HepG2 (cell line): ENCODE measurements at regions of chr1 and their contacts with region 1.

Region 1: GRCh38 chr1:108049178-108049819 is 84.3 kb upstream of the VAV3 start:
- DNase-seq: no peak
- ATAC-seq: peak; percentile 71
- H3K4me3 ChIP-seq: no peak overlapping the region
- H3K27ac ChIP-seq: no peak overlapping the region
- H3K4me1 ChIP-seq: peaks cover 45% of the 10 kb centered on the region
- H3K27me3 ChIP-seq: peaks cover 0 to 18% of the 10 kb centered on the region in 2 experiments; a peak in 2 of 5 replicates
- CTCF ChIP-seq: peak; percentile 14; the same call in 1 of the 2 replicates
- EP300 ChIP-seq: no peak
- POLR2A ChIP-seq: no peak
- RAD21 ChIP-seq: no peak

Region 2: DNA sequence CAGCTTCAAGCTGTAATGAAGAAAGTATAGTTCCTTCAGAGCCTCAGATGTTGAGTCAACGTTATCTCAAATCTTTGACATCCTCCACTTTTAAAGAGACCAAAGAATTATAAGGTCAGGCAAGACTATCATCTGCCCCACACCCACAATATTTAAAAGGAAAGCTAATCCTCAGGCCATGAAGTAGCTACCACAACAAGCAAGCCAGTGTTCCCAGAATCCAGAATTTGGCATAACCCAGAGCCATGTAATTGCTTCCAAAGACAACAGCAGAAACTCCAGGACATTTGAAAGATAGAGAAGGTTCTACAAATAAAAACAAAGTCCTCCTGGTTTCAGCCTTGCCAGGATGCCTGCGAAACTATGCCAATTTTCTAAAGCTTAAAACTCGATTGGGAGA is 109.1 kb before region 1 on chr1:
- CTCF ChIA-PET with region 1: no interaction called
- POLR2A ChIA-PET with region 1: no interaction called
- in situ Hi-C with region 1: no loop called
- intact Hi-C with region 1: loop called (anchors 1 kb)
- DNase-seq: no peak
- ATAC-seq: no peak
- H3K4me3 ChIP-seq: no peak overlapping the region
- H3K27ac ChIP-seq: no peak overlapping the region
- H3K4me1 ChIP-seq: no peaks in the 10 kb centered on the region
- H3K27me3 ChIP-seq: no peaks in the 10 kb centered on the region; a peak in 1 of 5 replicates
- CTCF ChIP-seq: no peak
- EP300 ChIP-seq: no peak
- POLR2A ChIP-seq: no peak
- RAD21 ChIP-seq: no peak

Region 3: GRCh38 chr1:108199781-108200570 is 150.7 kb after region 1 on chr1 and contains the start of gene SLC25A24:
- CTCF ChIA-PET with region 1: no interaction called
- POLR2A ChIA-PET with region 1: no interaction called
- in situ Hi-C with region 1: no loop called
- intact Hi-C with region 1: loop called (anchors 5 kb)
- DNase-seq: peak; percentile 47
- ATAC-seq: peak; percentile 98
- H3K4me3 ChIP-seq: peak within 1 kb of the TSS; percentile 57 to 83 (median 75)
- H3K27ac ChIP-seq: peak within 1 kb of the TSS; percentile 27
- H3K4me1 ChIP-seq: 0 out of 2 replicates have a peak, but pooled peaks cover 21% of the 10 kb centered on the region
- H3K27me3 ChIP-seq: peaks cover 0 to 8% of the 10 kb centered on the region in 2 experiments; a peak in 1 of 5 replicates
- CTCF ChIP-seq: no peak
- EP300 ChIP-seq: no peak
- POLR2A ChIP-seq: peak; percentile 46 to 81; a peak in 3 of 4 replicates
- RAD21 ChIP-seq: no peak
- total RNA-seq, gene SLC25A24: 12.4 and 19.1 TPM in 2 replicates